ENCODE measurements at regions of chr2 and their contacts with region 1.

Region 1: DNA sequence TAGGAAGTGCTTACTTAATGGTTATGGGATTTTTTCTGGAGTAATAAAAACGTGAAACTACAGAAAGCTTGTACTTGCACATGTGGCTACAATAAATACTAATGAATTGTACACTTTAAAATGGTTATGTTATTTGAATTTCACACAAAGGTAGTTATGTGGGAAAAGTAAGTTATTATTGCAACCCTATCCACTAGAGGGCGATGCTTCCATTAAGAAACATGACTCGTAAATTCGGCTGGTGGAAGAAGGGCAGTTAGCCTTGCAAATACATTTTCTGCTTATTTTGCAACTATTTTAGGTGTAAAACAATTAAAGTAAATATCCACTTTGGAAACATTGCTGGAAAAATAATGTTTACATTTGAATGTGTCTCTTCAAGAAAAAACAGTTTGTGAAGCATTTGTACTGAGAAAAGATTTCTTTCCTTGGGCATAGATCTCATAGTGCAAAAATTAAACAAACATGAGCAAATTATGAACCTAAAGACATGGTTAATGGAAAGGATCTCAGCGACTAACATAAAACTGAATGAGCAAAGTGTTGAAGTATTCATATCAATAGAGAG is 68.1 kb upstream of the CSRNP3 start:
- DNase-seq: no peak
- ATAC-seq: no peak
- H3K4me3 ChIP-seq: no peak overlapping the region
- H3K27ac ChIP-seq: no peak overlapping the region
- H3K4me1 ChIP-seq: no peaks in the 10 kb centered on the region
- H3K27me3 ChIP-seq: no peaks in the 10 kb centered on the region

Region 2: GRCh38 chr2:165698444-165698894 is 297.1 kb after region 1 on chr2:
- intact Hi-C with region 1: loop called in 3 of 4 experiments (anchors 2 to 5 kb)
- DNase-seq: peak in 2 of 3 donors; percentile 26 to 48
- ATAC-seq: peak; percentile 58 to 83
- H3K4me3 ChIP-seq: no peak overlapping the region
- H3K27ac ChIP-seq: no peak overlapping the region
- H3K4me1 ChIP-seq: no peaks in the 10 kb centered on the region
- H3K27me3 ChIP-seq: no peaks in the 10 kb centered on the region

Region 3: GRCh38 chr2:165874445-165875039 is 473.2 kb after region 1 on chr2:
- intact Hi-C with region 1: loop called in 3 of 4 experiments (anchors 5 to 10 kb)
- DNase-seq: no peak
- ATAC-seq: peak; percentile 61 to 71
- H3K4me3 ChIP-seq: no peak overlapping the region
- H3K27ac ChIP-seq: no peak overlapping the region
- H3K4me1 ChIP-seq: peaks cover 2% of the 10 kb centered on the region
- H3K27me3 ChIP-seq: no peaks in the 10 kb centered on the region

Measured in right cardiac atrium (tissue), 5 donors.